CD8-positive, alpha-beta T cell (primary cell): ENCODE measurements at regions of chr12 and their contacts with region 1.

Region 1: DNA sequence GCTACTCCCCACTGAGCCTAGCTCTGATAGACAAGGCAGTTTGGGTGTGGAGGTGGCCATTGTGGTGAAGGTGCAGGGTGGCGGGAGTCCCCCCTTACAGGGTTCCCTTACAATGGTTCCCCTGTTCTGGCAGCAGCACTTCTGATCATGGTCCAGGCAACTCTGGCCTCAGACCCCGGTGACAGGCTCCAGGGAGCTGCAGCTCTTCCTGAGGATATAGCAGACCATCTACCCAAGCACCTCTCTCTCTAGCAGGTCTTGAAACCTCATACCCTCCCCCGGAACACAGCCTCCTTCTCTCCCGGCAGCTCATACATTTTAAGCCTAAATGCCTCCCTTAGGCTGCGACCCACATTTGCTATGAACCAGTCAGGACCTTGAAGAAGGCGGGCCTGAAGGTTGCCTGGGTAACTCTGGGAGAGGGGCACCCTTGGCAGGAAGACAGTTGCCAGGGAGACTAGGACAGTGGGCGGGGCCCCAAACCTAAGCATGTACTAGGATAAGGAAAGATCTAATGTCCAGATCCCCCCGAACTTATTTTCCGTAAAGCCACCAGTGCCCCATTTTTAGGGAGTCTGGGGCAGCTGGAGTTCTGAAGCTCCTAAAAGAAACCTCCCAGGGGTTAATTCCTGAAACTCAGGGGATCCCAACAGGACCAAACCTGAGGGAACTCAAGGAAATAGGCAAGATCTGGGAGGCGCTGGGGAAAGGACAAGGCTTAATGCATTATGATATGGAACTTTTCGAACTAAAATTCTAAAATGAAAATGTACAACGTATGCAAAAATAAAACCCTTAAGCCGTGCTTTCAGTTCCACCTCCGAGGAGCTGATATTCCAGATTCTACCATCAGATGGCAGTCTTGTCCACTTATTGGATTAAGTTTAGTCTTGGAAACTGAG is 4.5 kb upstream of the GDF11 start:
- DNase-seq: peak; percentile 51 to 89 (median 81)
- ATAC-seq: peak; percentile 75
- H3K4me3 ChIP-seq: peak overlapping the region; percentile 73 to 80
- H3K4me3 Mint-ChIP-seq: peak overlapping the region; percentile 90
- H3K27ac ChIP-seq: peak overlapping the region; percentile 73 to 87
- H3K27ac Mint-ChIP-seq: peak overlapping the region; percentile 93
- H3K4me1 ChIP-seq: peaks cover 22% of the 10 kb centered on the region
- H3K4me1 Mint-ChIP-seq: peaks cover 24% of the 10 kb centered on the region
- H3K27me3 ChIP-seq: no peaks in the 10 kb centered on the region
- H3K27me3 Mint-ChIP-seq: no peaks in the 10 kb centered on the region
- CTCF ChIP-seq: peak; percentile 90

Region 2: GRCh38 chr12:55755246-55755645 is 16.9 kb after region 1 on chr12:
- CTCF ChIA-PET with region 1: interaction called, 21 read pairs
- POLR2A ChIA-PET with region 1: interaction called, 5 read pairs
- intact Hi-C with region 1: no loop called
- DNase-seq: no peak
- ATAC-seq: no peak
- H3K4me3 ChIP-seq: no peak overlapping the region
- H3K4me3 Mint-ChIP-seq: no peak overlapping the region
- H3K27ac ChIP-seq: no peak overlapping the region
- H3K27ac Mint-ChIP-seq: peak overlapping the region; percentile 46
- H3K4me1 ChIP-seq: no peaks in the 10 kb centered on the region
- H3K4me1 Mint-ChIP-seq: no peaks in the 10 kb centered on the region
- H3K27me3 ChIP-seq: no peaks in the 10 kb centered on the region
- H3K27me3 Mint-ChIP-seq: no peaks in the 10 kb centered on the region
- CTCF ChIP-seq: no peak

Region 3: GRCh38 chr12:55877824-55878223 is 139.4 kb after region 1 on chr12:
- CTCF ChIA-PET with region 1: no interaction called
- POLR2A ChIA-PET with region 1: no interaction called
- intact Hi-C with region 1: no loop called
- DNase-seq: no peak
- ATAC-seq: no peak
- H3K4me3 ChIP-seq: no peak overlapping the region
- H3K4me3 Mint-ChIP-seq: no peak overlapping the region
- H3K27ac ChIP-seq: no peak overlapping the region
- H3K27ac Mint-ChIP-seq: no peak overlapping the region
- H3K4me1 ChIP-seq: no peaks in the 10 kb centered on the region
- H3K4me1 Mint-ChIP-seq: peaks cover 7% of the 10 kb centered on the region
- H3K27me3 ChIP-seq: no peaks in the 10 kb centered on the region
- H3K27me3 Mint-ChIP-seq: no peaks in the 10 kb centered on the region
- CTCF ChIP-seq: no peak

Region 4: DNA sequence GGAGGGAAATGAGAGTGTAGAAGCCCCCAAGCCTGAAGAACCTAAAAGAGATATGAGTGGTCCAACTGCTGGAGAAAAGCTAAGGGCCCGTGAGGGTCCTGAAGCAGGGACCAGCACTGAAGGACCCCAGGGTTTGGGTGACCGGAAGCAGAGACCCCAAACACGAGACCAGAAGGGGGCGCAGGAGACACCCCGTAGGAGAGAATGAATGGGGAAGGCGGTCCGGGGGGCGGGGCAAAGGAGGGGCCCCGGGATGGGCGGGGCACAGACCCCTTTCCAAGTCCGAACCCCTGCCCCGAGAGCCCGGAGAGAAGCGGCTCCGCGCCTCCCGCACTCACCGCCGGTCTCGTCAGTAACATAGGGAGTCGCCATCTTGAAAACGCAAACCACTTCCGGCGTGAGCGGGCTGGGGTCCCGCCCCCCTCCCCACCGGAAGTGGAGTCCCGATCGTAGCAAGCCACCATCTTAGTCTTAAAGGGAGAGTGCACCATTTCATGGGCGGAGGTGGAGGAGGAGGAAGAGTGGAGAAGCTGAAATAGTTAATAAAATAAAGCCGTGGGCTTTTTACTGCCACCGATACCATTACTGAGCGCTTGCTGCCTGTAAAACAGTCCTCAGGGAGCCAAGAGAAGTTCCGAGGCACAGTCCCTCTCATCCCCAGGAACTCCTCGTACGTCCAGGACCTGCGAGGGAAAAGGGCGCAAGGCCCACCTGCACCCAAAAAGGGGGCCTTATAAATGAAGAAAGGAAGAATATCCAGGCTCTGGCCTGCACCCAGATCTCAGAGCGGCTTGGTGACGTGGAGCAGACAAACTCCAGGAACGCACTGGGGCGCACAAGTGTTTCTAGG is 188.6 kb after region 1 on chr12:
- CTCF ChIA-PET with region 1: interaction called, 19 read pairs
- POLR2A ChIA-PET with region 1: interaction called, 8 read pairs
- intact Hi-C with region 1: loop called in 1 of 2 experiments (anchors 1 kb)
- DNase-seq: peak; percentile 75 to 96 (median 88)
- ATAC-seq: peak; percentile 35
- H3K4me3 ChIP-seq: peak overlapping the region; percentile 90 to 98
- H3K4me3 Mint-ChIP-seq: peak overlapping the region; percentile 99
- H3K27ac ChIP-seq: peak overlapping the region; percentile 65 to 80
- H3K27ac Mint-ChIP-seq: peak overlapping the region; percentile 95
- H3K4me1 ChIP-seq: peaks cover 40% of the 10 kb centered on the region
- H3K4me1 Mint-ChIP-seq: peaks cover 51% of the 10 kb centered on the region
- H3K27me3 ChIP-seq: no peaks in the 10 kb centered on the region
- H3K27me3 Mint-ChIP-seq: no peaks in the 10 kb centered on the region
- CTCF ChIP-seq: peak; percentile 70

Region 5: GRCh38 chr12:55973598-55974307 is 235.4 kb after region 1 on chr12 and contains the start of gene RAB5B:
- CTCF ChIA-PET with region 1: interaction called, 14 read pairs
- POLR2A ChIA-PET with region 1: interaction called, 5 read pairs
- intact Hi-C with region 1: no loop called
- DNase-seq: peak; percentile 94 to 100 (median 97)
- ATAC-seq: peak; percentile 87
- H3K4me3 ChIP-seq: peak within 1 kb of the TSS; percentile 81 to 84
- H3K4me3 Mint-ChIP-seq: no peak within 1 kb of the TSS
- H3K27ac ChIP-seq: peak within 1 kb of the TSS; percentile 76 to 90
- H3K27ac Mint-ChIP-seq: no peak within 1 kb of the TSS
- H3K4me1 ChIP-seq: peaks cover 18% of the 10 kb centered on the region
- H3K4me1 Mint-ChIP-seq: peaks cover 27% of the 10 kb centered on the region
- H3K27me3 ChIP-seq: no peaks in the 10 kb centered on the region
- H3K27me3 Mint-ChIP-seq: no peaks in the 10 kb centered on the region
- CTCF ChIP-seq: no peak
- total RNA-seq, gene RAB5B: 16.1 to 16.8 TPM

Region 6: GRCh38 chr12:56041552-56042429 is 303.4 kb after region 1 on chr12 and contains the start of gene RPS26:
- CTCF ChIA-PET with region 1: interaction called, 8 read pairs
- POLR2A ChIA-PET with region 1: no interaction called
- intact Hi-C with region 1: loop called (anchors 1 to 2 kb)
- DNase-seq: peak; percentile 79 to 99 (median 92)
- ATAC-seq: peak; percentile 93
- H3K4me3 ChIP-seq: peak within 1 kb of the TSS; percentile 71 to 83
- H3K4me3 Mint-ChIP-seq: peak within 1 kb of the TSS; percentile 99
- H3K27ac ChIP-seq: peak within 1 kb of the TSS; percentile 75 to 95
- H3K27ac Mint-ChIP-seq: peak within 1 kb of the TSS; percentile 99
- H3K4me1 ChIP-seq: peaks cover 29% of the 10 kb centered on the region
- H3K4me1 Mint-ChIP-seq: peaks cover 42% of the 10 kb centered on the region
- H3K27me3 ChIP-seq: no peaks in the 10 kb centered on the region
- H3K27me3 Mint-ChIP-seq: no peaks in the 10 kb centered on the region
- CTCF ChIP-seq: peak; percentile 48
- total RNA-seq, gene RPS26: 33.8 to 36.7 TPM

Region 7: DNA sequence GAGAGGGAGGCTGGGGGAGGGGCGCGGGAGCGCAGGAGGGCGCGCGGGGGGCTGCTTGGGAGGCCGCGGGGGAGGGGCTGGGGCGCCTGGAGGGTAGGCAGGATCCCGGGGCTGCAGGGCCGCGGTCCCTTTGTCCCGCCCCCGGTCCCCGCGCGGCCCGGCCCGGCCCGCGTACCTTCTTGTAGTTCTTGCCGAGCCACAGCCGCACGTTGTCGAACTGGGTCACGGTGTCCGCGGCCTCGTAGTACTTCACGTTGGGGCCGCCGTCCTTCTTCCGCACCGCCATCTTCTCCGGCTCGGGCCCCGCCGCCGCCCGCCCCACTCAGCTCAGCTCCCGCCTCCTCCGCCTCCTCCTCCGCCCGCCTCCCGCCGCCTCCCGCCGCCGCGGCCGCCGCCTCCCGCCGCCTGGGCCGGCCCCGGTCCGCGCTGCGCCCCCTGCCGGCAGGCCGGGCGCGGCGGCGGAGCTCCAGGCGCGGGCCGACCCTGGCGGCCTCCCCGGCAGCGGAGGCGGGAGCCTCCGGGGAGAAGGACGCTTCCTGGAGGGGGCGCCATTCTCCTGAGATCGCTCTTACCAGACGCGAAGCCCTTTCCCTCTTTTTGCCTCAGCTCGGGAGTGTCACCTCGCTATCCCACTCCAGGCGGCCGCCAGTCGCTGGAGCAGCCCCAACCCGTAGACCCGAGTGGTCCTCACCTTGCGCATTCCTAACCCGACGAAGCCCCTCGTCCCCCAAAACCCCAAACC is 451.0 kb after region 1 on chr12 and contains the start of gene SMARCC2:
- CTCF ChIA-PET with region 1: interaction called, 8 read pairs
- POLR2A ChIA-PET with region 1: interaction called, 5 read pairs
- intact Hi-C with region 1: loop called in 1 of 2 experiments (anchors 1 kb)
- DNase-seq: peak; percentile 69 to 94 (median 84)
- ATAC-seq: peak; percentile 82
- H3K4me3 ChIP-seq: peak within 1 kb of the TSS; percentile 65 to 96
- H3K4me3 Mint-ChIP-seq: peak within 1 kb of the TSS; percentile 96
- H3K27ac ChIP-seq: peak within 1 kb of the TSS; percentile 66 to 82
- H3K27ac Mint-ChIP-seq: peak within 1 kb of the TSS; percentile 94
- H3K4me1 ChIP-seq: peaks cover 19% of the 10 kb centered on the region
- H3K4me1 Mint-ChIP-seq: peaks cover 43% of the 10 kb centered on the region
- H3K27me3 ChIP-seq: no peaks in the 10 kb centered on the region
- H3K27me3 Mint-ChIP-seq: no peaks in the 10 kb centered on the region
- CTCF ChIP-seq: peak; percentile 61
- total RNA-seq, gene SMARCC2: 109 to 113 TPM

Region 8: DNA sequence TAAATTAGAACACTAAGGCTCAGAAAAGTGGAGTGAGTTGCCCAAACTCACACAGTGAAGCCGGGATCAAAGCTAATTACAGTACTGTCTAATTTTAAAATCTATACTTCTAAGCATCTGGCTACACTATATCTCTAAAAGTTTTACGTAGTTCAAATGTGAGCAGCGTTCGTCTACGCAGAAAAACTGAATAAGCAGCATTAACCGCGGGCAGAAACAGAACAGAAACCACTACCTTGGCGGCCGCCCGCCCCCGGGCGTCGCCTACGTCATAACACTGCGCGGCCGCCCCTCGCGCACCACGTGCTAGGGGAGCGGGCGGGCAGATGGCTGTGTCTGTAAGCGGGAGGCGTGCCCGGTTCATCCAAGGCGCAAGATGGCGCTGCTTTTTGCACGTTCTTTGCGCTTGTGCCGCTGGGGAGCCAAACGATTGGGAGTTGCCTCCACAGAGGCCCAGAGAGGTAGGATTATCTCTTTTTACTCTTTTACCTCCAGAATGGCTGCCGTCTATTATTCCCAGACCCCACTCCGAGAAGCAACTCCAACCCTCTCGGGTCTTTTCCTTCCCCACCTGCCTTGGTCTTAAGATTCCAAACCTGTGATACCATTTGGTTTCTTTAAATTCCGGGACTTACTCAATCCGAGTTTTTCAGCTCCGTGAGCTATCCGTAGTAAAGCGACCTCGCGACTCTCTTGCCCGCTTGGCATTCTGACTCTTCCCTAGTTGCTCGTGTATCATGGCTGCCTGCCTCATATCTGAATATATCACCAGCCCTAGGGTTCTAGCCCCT is 730.0 kb after region 1 on chr12 and contains the start of gene SPRYD4:
- CTCF ChIA-PET with region 1: interaction called, 3 read pairs
- POLR2A ChIA-PET with region 1: no interaction called
- intact Hi-C with region 1: loop called in 1 of 2 experiments (anchors 2 kb)
- DNase-seq: peak; percentile 89 to 97 (median 93)
- ATAC-seq: peak; percentile 90
- H3K4me3 ChIP-seq: peak within 1 kb of the TSS; percentile 72 to 99
- H3K4me3 Mint-ChIP-seq: peak within 1 kb of the TSS; percentile 95
- H3K27ac ChIP-seq: peak within 1 kb of the TSS; percentile 93 to 96
- H3K27ac Mint-ChIP-seq: peak within 1 kb of the TSS; percentile 98
- H3K4me1 ChIP-seq: peaks cover 10% of the 10 kb centered on the region
- H3K4me1 Mint-ChIP-seq: peaks cover 35% of the 10 kb centered on the region
- H3K27me3 ChIP-seq: no peaks in the 10 kb centered on the region
- H3K27me3 Mint-ChIP-seq: no peaks in the 10 kb centered on the region
- CTCF ChIP-seq: no peak
- total RNA-seq, gene SPRYD4: 6.8 to 6.9 TPM